ENCODE measurements at regions of chr1 and their contacts with region 1.

Region 1: GRCh38 chr1:101238681-101239094 is 1.9 kb downstream of the S1PR1 start:
- ATAC-seq: peak; percentile 8 to 50 (median 32)
- H3K4me3 ChIP-seq: peak overlapping the region in 4 of 5 donors; percentile 46 to 61 (median 49)
- H3K27ac ChIP-seq: no peak overlapping the region
- H3K4me1 ChIP-seq: peaks cover 0 to 6% of the 10 kb centered on the region in 2 donors

Region 2: DNA sequence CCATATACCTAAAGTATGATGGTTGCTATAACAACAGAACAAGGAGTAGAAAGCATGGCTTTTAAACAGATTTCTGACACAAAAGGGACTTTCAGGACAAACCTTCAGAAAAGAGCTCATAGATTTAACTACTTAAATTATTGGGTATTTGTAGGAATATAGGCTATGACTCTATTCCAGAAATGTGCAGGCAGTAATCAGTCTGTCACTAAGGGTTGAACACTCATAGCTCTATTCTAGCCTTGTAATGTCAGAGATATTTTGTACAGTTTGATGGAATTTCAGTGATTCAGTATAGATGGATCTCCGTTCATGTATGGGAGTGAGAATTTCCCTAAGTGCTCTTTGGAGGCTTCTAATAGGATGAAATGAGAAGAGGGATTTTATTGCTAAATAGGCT is 426.9 kb before region 1 on chr1:
- in situ Hi-C with region 1: no loop called
- ATAC-seq: no peak
- H3K4me3 ChIP-seq: no peak overlapping the region
- H3K27ac ChIP-seq: no peak overlapping the region
- H3K4me1 ChIP-seq: peaks cover 0 to 3% of the 10 kb centered on the region in 2 donors

Region 3: GRCh38 chr1:100921109-100921706 is 317.5 kb before region 1 on chr1:
- in situ Hi-C with region 1: loop called in 1 of 9 experiments (anchors 25 kb)
- ATAC-seq: no peak
- H3K4me3 ChIP-seq: no peak overlapping the region
- H3K27ac ChIP-seq: no peak overlapping the region
- H3K4me1 ChIP-seq: no peaks in the 10 kb centered on the region

Region 4: GRCh38 chr1:101002551-101002950 is 236.1 kb before region 1 on chr1:
- in situ Hi-C with region 1: loop called in 1 of 9 experiments (anchors 25 kb)
- ATAC-seq: peak in 7 of 8 experiments; percentile 47 to 85 (median 56)
- H3K4me3 ChIP-seq: no peak overlapping the region
- H3K27ac ChIP-seq: no peak overlapping the region
- H3K4me1 ChIP-seq: peaks cover 3 to 14% of the 10 kb centered on the region in 2 donors

Region 5: GRCh38 chr1:101664726-101665125 is 426.0 kb after region 1 on chr1:
- in situ Hi-C with region 1: no loop called
- ATAC-seq: no peak
- H3K4me3 ChIP-seq: no peak overlapping the region
- H3K27ac ChIP-seq: no peak overlapping the region
- H3K4me1 ChIP-seq: no peaks in the 10 kb centered on the region